ENCODE measurements at regions of chrX and their contacts with region 1.

Region 1: GRCh38 chrX:130110379-130111219 is at the start of gene ELF4:
- DNase-seq: peak; percentile 78 to 85 (median 81)
- ATAC-seq: peak; percentile 67
- H3K4me3 ChIP-seq: peak within 1 kb of the TSS; percentile 71
- H3K27ac ChIP-seq: peak within 1 kb of the TSS; percentile 96
- H3K4me1 ChIP-seq: peaks cover 40 to 49% of the 10 kb centered on the region in 2 experiments
- H3K27me3 ChIP-seq: no peaks in the 10 kb centered on the region
- CTCF ChIP-seq: no peak
- EP300 ChIP-seq: no peak
- POLR2A ChIP-seq: 0 out of 2 replicates have a peak, but pooled peaks have one; percentile 41
- RAD21 ChIP-seq: no peak
- polyA plus RNA-seq, gene ELF4: 5.9 to 7.3 TPM

Region 2: DNA sequence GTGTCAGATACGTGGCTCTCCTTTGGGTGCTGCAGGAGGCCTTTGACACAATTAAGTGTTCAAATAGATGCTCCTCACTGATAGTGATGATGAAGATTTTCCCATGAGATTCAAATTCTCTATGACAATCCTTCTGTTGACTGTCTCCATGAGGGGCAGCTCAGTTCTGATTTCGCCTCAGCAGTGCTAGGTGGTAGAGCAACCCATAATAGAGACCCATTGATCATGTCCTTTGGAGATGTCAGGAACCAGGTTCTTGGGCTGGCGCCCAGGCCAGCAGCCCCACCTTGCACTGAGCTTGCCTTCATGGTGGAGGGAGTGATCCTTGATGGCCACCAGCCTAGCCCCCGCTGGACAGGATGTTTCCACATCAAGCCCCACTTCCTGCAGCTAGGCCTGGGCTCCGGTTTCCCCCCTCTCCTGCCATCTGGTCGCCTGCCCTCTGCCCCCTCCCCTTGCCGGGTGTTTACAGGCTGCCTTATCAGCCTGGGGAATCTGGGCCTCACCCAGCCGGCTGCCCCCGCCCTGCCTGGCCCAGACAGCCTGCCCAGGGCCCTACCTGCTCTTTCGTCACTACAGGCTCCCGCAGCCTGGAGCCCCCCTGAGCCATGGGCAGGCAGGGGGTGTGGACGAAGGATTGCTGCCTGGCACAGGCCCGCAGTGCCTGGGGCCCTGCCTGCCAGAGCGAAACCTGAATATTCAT is 12.9 kb before region 1 on chrX:
- CTCF ChIA-PET with region 1: no interaction called
- POLR2A ChIA-PET with region 1: interaction called, 12 read pairs
- in situ Hi-C with region 1: no loop called
- intact Hi-C with region 1: no loop called
- DNase-seq: peak in 3 of 4 experiments; percentile 32 to 60 (median 56)
- ATAC-seq: peak; percentile 63
- H3K4me3 ChIP-seq: no peak overlapping the region
- H3K27ac ChIP-seq: peak overlapping the region; percentile 29; the same call in 1 of the 3 replicates
- H3K4me1 ChIP-seq: peaks cover 42 to 47% of the 10 kb centered on the region in 2 experiments
- H3K27me3 ChIP-seq: no peaks in the 10 kb centered on the region
- CTCF ChIP-seq: no peak
- EP300 ChIP-seq: no peak
- POLR2A ChIP-seq: no peak
- RAD21 ChIP-seq: no peak

Region 3: GRCh38 chrX:130120746-130121504 is 10.3 kb after region 1 on chrX:
- CTCF ChIA-PET with region 1: no interaction called
- POLR2A ChIA-PET with region 1: interaction called, 10 read pairs
- in situ Hi-C with region 1: no loop called
- intact Hi-C with region 1: no loop called
- DNase-seq: peak; percentile 74 to 83 (median 78)
- ATAC-seq: peak; percentile 91
- H3K4me3 ChIP-seq: peak overlapping the region; percentile 34
- H3K27ac ChIP-seq: peak overlapping the region; percentile 86
- H3K4me1 ChIP-seq: peaks cover 39 to 53% of the 10 kb centered on the region in 2 experiments; a peak in 4 of 5 replicates
- H3K27me3 ChIP-seq: no peaks in the 10 kb centered on the region
- CTCF ChIP-seq: peak; percentile 58 to 81 (median 77)
- EP300 ChIP-seq: no peak
- POLR2A ChIP-seq: peak; percentile 74
- RAD21 ChIP-seq: peak; percentile 55 to 64

Region 4: DNA sequence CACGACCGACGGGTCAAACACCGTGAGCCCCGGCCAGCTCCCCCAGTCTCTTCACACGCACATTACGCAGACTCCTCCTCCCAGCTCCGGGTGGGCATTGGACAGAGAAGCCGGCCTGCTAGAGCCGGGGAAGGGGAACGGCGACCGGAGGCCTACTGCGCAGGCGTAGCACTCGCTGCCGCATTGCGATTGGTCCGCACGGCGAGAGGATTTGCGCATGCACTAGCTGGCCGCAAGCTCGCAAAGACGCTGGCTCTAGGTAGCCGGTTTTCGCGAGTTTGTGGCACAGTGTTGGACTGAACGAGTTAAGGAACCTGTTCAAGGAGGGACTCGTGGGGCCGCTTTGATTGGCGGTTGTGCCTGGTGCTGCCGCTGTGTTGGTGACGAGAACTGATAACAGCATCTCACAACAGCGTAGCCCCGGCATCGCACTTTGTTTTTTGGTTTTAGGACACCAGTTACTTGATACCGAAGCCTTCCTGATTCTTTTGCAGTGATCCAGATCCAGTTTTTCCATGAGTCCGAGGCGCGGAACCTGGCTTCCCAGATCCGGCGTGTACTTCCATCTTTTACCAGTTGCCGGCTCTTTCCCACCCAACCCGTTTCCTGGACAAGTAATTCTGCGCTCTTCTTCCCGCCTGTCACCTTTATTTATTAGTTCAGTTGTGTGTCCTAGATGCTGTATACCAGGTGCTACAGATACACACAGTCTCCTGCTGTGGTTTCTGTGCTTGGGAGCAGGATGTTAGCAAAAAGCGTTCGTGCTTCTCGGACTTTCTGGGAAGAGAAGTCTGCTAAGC is 55.3 kb after region 1 on chrX and contains the start of gene AIFM1:
- CTCF ChIA-PET with region 1: no interaction called
- POLR2A ChIA-PET with region 1: interaction called, 3 read pairs
- in situ Hi-C with region 1: no loop called
- intact Hi-C with region 1: loop called (anchors 5 kb)
- DNase-seq: peak; percentile 91 to 96 (median 93)
- ATAC-seq: peak; percentile 92
- H3K4me3 ChIP-seq: peak within 1 kb of the TSS; percentile 68
- H3K27ac ChIP-seq: peak within 1 kb of the TSS; percentile 98
- H3K4me1 ChIP-seq: peaks cover 8 to 23% of the 10 kb centered on the region in 2 experiments; a peak in 3 of 5 replicates
- H3K27me3 ChIP-seq: no peaks in the 10 kb centered on the region
- CTCF ChIP-seq: no peak
- EP300 ChIP-seq: 0 out of 2 replicates have a peak, but pooled peaks have one; percentile 39
- POLR2A ChIP-seq: peak; percentile 93
- RAD21 ChIP-seq: peak; percentile 13 to 16; a peak in 1 of 4 replicates
- polyA plus RNA-seq, gene AIFM1: 51.0 to 62.0 TPM

Region 5: GRCh38 chrX:130260316-130260715 is 149.7 kb after region 1 on chrX:
- CTCF ChIA-PET with region 1: no interaction called
- POLR2A ChIA-PET with region 1: no interaction called
- in situ Hi-C with region 1: no loop called
- intact Hi-C with region 1: no loop called
- DNase-seq: peak; percentile 21 to 25 (median 22)
- ATAC-seq: peak; percentile 78
- H3K4me3 ChIP-seq: no peak overlapping the region
- H3K27ac ChIP-seq: no peak overlapping the region
- H3K4me1 ChIP-seq: peaks cover 0 to under 1% of the 10 kb centered on the region in 2 experiments; a peak in 1 of 5 replicates
- H3K27me3 ChIP-seq: no peaks in the 10 kb centered on the region
- CTCF ChIP-seq: no peak
- EP300 ChIP-seq: no peak
- POLR2A ChIP-seq: no peak
- RAD21 ChIP-seq: no peak